G401 (cell line): ENCODE measurements at regions of chr20 and their contacts with region 1.

Region 1: DNA sequence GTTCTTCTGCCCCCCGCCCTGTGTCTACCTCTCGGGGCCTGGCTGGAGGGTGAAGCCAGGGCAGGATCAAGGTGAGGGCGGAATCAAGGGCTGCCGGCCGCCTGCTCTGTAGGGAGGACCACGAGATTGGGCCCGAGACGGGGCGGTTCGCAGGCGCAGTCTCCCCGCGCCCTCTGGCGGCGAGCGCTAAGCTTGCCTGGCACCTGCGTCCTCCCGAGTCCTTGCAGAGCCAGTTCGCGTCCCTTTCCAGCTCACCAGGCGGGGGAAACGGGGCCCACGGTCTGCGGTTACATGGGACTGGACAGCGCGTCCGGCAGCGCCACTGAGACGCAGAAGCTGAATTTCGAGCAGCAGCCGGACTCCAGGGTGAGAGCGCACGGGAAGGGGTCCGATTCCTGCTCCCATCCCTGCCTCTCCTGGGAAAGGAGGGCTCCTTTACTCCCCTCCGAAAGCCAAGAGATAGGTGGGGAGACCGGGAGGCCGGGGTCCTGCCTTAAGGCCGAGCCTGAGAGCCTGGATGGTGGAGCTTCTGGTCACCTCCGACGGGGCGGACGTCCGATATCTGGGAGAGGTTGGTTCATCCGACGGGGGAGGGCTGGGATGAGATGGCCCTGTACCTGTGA is 3.6 kb upstream of the MATN4 start:
- DNase-seq: peak; percentile 36

Region 2: DNA sequence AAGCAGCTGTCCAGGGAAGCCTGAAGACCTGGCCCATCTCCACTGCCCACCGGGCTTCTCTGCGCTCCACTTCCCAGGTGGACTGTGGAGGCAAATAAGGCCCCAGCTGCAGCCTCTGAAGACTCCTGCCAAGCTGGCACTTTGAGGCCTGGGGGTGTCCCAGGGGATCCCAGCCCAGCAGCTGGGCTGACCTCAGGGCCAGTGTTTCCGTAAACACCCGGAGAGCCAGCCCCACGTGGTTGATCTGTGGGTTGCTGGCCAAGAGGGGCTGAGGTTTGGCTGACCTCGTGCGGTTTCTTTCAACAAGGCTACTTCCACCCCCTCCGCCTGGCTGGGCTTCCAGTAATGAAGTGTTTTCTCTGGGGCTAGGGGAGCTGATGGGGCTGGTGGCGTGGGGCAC is 608.9 kb before region 1 on chr20:
- in situ Hi-C with region 1: no loop called
- DNase-seq: no peak

Region 3: DNA sequence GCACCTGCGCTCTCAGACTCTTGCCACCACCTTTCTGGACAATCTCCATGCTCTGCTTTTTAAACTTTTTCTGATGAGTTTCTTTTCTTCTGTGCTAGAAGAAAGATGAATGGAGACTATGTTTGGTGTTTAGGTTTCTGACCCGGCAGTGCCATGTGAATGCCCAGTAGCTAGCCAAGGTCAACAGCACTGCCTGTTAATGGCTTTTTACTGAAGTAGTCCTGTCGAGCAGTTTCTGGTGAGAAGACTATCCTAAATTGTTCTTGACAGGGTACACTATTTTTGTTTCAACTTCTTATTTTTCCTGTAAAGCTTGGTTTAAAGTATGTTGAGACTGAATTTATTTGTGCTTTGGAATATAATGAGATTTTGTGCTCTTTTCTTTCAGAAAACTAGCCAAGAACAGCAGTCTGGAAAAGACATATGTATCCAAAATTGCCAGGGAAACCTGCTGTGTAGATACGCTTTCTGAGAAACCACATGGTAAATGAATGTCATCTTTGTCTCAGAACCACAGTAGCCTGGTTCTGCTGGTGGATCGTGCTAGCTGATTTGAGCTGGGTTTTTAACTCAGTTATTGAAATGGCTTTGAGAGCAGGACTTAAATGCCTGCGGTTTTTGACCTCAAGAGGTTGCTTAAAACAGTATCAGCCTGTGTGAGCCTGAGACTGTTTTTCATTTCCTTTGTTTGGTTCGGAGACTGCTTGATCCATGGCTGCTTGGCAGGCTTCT is 258.8 kb before region 1 on chr20:
- in situ Hi-C with region 1: no loop called
- DNase-seq: peak; percentile 39

Region 4: GRCh38 chr20:45254869-45255266 is 56.8 kb before region 1 on chr20:
- in situ Hi-C with region 1: no loop called
- DNase-seq: no peak

Region 5: GRCh38 chr20:45347936-45348778 is 36.5 kb after region 1 on chr20 and contains the start of gene SDC4:
- in situ Hi-C with region 1: no loop called
- DNase-seq: no peak
- total RNA-seq, gene SDC4: 16.4 and 24.7 TPM in 2 replicates

Region 6: GRCh38 chr20:45487231-45487635 is 175.5 kb after region 1 on chr20:
- in situ Hi-C with region 1: loop called (anchors 25 kb)
- DNase-seq: no peak

Region 7: DNA sequence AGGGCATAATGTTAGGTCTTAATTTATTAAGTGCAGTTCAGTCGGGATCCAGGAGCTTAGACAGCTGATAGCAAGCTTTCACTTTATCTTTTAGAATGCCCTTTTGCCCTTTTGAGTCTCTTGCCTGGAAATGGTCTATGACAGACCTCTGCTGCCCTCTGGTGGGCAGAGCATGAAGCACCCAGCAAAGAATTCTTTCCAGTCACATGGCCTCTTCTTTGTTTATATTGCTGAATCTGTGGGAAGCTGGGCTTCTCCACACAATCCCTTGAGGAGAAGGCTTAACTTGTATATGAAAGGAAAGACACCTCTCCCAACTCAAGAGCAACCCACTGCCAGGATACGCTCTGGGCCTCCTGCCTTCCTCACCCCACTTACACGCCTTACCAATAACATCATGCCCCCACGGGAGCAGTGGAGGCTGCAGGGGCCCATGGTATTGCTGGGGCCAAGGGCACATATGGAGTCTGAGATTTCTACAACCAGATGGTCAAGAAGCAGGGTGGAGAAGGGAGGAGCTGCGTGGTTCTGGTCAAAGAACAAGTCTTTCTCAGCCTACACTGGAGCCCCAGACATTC is 459.6 kb after region 1 on chr20:
- in situ Hi-C with region 1: loop called (anchors 25 kb)
- DNase-seq: peak; percentile 83